Sigmoid colon (tissue), 7 donors: ENCODE measurements at regions of chr19 and their contacts with region 1.

Region 1: GRCh38 chr19:55418185-55418584 is 10.6 kb upstream of the UBE2S start:
- DNase-seq: no peak
- H3K4me3 ChIP-seq: no peak overlapping the region
- H3K27ac ChIP-seq: no peak overlapping the region
- H3K4me1 ChIP-seq: no peaks in the 10 kb centered on the region
- H3K27me3 ChIP-seq: peaks cover 0 to 12% (median 0%) of the 10 kb centered on the region in 3 donors
- CTCF ChIP-seq: peak; percentile 8 to 53 (median 42)
- EP300 ChIP-seq: no peak
- POLR2A ChIP-seq: no peak

Region 2: DNA sequence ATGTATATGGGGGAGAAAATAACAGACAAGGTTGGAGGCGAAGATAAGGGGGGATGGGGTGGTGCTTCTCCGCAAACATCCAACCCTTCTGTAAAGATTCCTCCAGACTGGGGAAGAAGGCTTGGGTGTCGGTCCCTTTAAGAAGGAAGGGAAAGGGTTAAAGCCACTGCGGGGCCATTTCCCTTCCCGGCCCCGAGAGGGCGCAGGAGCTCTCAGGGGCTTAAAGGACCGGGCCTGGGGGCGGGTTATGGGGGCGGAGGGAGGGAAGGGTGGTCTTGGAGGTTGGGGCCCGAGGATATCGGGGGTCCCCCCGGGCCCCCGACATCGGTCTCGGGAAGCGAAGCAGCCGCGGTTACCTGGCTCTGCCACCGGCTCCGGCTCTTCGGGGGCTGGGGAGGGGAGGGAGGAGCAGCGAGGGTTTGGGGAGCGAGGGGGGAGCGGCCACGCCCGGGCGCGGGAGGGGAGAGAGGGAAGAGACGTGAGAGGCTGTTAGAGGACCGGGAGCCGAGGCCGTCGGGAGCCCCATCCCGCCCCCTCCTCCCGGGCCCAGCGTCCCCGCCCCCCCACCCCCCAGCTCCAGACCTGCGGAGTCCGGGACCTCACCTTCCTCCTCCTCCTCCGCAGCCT is 272.0 kb before region 1 on chr19:
- intact Hi-C with region 1: loop called (anchors 10 kb)
- DNase-seq: no peak
- H3K4me3 ChIP-seq: no peak overlapping the region
- H3K27ac ChIP-seq: no peak overlapping the region
- H3K4me1 ChIP-seq: peaks cover 0 to 16% (median 5%) of the 10 kb centered on the region in 4 donors
- H3K27me3 ChIP-seq: peaks cover 32 to 99% (median 91%) of the 10 kb centered on the region in 3 donors
- CTCF ChIP-seq: no peak
- EP300 ChIP-seq: no peak
- POLR2A ChIP-seq: no peak

Region 3: DNA sequence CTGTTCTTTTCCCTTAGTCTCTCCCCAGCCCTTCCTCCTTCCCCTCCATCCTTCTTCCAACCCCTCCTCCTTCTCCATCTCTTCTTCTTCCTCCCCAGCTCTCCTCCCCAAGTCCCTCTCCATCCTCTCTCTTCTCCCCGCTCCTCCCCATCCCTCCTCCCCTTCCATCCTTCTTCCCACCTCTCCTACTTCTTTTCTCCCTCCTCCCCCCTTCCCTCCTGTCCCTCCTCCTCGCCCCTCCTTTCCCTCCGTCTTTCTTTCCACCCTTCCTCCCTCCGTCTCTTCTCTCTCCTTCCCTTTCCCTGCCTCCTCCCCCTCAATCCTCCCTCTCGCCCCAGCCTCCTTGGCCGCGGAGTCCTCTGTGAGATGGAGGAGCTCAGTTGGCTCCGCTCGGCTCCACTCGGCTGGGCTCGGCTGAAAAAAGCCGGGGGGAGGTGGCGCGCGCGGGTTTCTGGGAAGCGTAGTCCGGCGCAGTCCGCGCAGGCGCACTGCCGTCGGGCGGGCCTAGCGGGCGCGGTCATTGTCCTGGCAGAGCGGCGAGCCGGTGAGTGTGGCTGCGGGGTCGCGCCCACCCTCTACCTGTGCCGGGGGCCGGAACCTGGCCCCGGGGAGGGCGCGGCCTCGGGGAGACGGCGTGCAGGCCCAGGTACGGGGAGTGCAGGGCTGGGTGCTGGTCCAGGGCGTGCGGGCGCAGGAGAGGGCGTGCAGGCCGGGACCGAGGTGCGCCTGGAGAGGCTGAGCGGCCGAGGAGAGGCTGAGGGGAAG is 1176.8 kb after region 1 on chr19 and contains the start of gene ZNF71:
- intact Hi-C with region 1: no loop called
- DNase-seq: peak; percentile 93
- H3K4me3 ChIP-seq: peak within 1 kb of the TSS; percentile 80 to 100 (median 90)
- H3K27ac ChIP-seq: peak within 1 kb of the TSS; percentile 71 to 80 (median 79)
- H3K4me1 ChIP-seq: peaks cover 0 to 19% (median 8%) of the 10 kb centered on the region in 4 donors
- H3K27me3 ChIP-seq: no peaks in the 10 kb centered on the region
- CTCF ChIP-seq: no peak
- EP300 ChIP-seq: no peak
- POLR2A ChIP-seq: no peak
- total RNA-seq, gene ZNF71: 10.4 to 18.0 (median 11.1) TPM